Stomach (tissue), 19 donors: ENCODE measurements at regions of chr22 and their contacts with region 1.

Region 1: DNA sequence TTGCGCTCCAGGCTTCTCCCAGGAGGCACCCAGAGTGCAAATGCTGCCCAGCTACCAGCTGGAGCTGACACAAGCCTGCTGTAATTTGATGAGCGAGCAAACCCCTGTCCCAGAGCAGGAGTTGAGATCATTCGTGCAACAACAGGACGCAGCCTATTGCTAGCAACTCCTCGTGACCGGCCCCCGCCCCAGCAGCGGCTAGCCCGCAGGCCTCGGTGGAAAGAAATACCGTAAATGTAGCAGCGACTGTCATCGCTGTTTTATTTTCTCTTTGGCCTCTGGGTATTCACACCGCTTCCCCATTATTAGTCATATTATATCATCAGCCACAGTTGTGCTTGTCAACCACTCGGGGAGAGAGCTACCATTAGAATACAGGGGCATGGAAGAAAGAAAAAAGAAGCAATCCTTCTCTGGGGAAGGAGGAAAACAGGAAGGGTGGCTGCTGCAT is 59.2 kb upstream of the ATXN10 start:
- DNase-seq: peak in 1 of 2 donors; percentile 63
- H3K4me3 ChIP-seq: no peak overlapping the region
- H3K27ac ChIP-seq: peak overlapping the region in 3 of 5 donors; percentile 26 to 37 (median 32)
- H3K4me1 ChIP-seq: no peaks in the 10 kb centered on the region
- H3K27me3 ChIP-seq: no peaks in the 10 kb centered on the region
- CTCF ChIP-seq: no peak
- EP300 ChIP-seq: no peak
- POLR2A ChIP-seq: no peak

Region 2: GRCh38 chr22:47597041-47597440 is 1984.6 kb after region 1 on chr22:
- intact Hi-C with region 1: loop called (anchors 10 kb)
- DNase-seq: no peak
- H3K4me3 ChIP-seq: no peak overlapping the region
- H3K27ac ChIP-seq: no peak overlapping the region
- H3K4me1 ChIP-seq: no peaks in the 10 kb centered on the region
- H3K27me3 ChIP-seq: peaks cover 0 to 38% (median 0%) of the 10 kb centered on the region in 3 donors
- CTCF ChIP-seq: no peak
- EP300 ChIP-seq: no peak
- POLR2A ChIP-seq: no peak